ENCODE measurements at regions of chr2 and their contacts with region 1.

Region 1: DNA sequence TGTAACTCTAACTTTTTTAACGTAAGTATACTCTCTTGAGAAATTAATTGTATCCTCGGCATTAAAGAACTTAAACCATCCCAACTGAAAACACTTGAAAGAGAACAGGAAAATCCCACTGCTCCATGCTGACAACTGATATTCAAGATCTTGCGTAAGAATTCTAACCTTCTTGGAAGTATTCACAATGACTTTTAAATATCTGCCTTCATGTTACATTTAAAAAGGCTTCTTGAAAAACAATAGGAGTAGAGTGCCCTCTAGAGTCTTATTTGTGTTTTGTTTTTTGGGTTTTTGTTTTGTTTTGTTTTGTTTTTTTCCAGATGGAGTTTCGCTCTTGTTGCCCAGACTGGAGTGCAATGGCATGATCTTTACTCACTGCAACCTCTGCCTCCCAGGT is 65.4 kb upstream of the DNAJC10 start:
- DNase-seq: no peak
- H3K4me3 ChIP-seq: no peak overlapping the region
- H3K27ac ChIP-seq: no peak overlapping the region
- H3K4me1 ChIP-seq: no peaks in the 10 kb centered on the region
- H3K27me3 ChIP-seq: no peaks in the 10 kb centered on the region
- CTCF ChIP-seq: peak; percentile 44 to 64 (median 56)
- EP300 ChIP-seq: no peak
- POLR2A ChIP-seq: no peak

Region 2: DNA sequence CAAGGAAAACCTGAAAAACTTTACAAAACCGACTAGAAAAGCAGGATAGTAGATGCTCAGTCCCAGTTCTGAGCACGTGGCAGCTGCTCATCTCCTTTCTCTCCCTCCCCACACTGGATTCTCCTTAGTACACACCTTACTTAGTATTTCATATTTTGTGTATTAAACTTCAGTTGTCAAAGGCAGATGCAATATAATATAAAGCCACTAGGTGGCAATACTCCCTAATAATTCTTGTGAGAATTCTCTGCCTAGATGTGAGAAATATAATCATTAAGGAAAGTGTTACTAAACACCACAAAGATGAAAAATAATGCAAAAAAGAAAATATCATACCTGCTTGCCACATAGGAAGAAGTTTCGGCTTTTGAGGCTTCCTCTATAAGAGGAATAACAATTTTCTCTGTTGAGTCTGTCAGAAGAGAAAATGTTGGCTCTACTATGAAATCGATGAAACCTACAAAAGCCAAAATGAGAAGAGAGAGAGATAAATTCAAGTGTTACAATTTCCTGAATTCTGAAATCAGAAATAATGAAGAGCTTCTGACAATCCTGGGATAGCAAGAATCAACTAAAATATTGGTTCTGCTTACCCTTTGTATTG is 464.5 kb before region 1 on chr2:
- in situ Hi-C with region 1: loop called (anchors 5 to 10 kb)
- intact Hi-C with region 1: loop called (anchors 5 kb)
- DNase-seq: no peak
- H3K4me3 ChIP-seq: no peak overlapping the region
- H3K27ac ChIP-seq: no peak overlapping the region
- H3K4me1 ChIP-seq: no peaks in the 10 kb centered on the region
- H3K27me3 ChIP-seq: no peaks in the 10 kb centered on the region
- CTCF ChIP-seq: peak; percentile 80 to 88 (median 84)
- EP300 ChIP-seq: no peak
- POLR2A ChIP-seq: no peak